PC-9 (cell line): ENCODE measurements at regions of chr3 and their contacts with region 1.

Region 1: GRCh38 chr3:71583566-71584449 is at the start of gene FOXP1:
- DNase-seq: peak; percentile 59 to 63
- H3K4me3 ChIP-seq: peak within 1 kb of the TSS; percentile 85
- H3K27ac ChIP-seq: peak within 1 kb of the TSS; percentile 55
- H3K4me1 ChIP-seq: peaks cover 30% of the 10 kb centered on the region
- H3K27me3 ChIP-seq: no peaks in the 10 kb centered on the region
- CTCF ChIP-seq: no peak
- total RNA-seq, gene FOXP1: 31.7 and 33.3 TPM in 2 replicates

Region 2: DNA sequence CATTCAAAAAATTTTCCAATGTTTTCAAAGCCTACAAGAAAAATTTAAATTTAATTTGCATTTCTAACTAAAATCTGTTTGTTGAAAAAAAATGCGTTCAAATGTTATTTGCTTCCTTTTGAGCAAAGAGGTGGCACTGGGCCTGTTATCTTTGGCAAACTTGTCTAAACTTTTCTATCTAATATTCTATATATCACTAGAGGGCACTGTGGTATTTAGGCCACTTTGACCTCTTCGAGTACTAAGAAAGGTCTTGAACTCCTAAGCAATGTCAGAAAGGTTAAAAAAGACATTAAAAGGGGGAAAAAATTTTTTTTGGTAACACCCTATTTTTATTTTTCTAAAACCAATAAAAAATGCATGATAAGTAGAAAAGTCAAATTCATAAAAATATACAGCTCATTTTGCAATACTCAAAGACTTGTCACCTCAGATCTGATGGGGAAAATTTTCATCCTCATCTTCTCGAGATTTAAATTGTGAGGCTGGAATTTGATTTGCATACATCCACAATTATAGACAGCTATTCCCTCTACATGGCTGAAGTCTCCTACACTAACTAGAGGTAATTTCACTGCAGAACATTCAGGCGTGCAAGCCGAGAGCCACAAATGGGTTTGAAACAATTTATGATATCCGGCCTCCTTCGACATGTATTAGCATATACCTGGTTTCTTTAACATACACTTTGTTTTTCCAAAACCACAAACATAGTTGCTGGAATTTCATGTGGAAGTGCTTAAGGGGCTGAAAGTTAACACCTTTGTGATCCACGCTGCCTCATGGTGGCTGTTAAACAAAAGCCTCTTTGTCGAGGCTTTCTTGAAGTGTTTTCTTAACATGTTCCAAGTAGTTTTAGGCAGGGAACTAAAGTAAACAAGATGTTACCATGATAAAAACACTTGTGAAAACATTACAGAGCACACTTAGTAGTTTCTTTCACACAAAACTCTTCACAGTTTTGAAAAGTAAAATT is 576.7 kb before region 1 on chr3:
- CTCF ChIA-PET with region 1: no interaction called
- POLR2A ChIA-PET with region 1: no interaction called
- intact Hi-C with region 1: loop called (anchors 1 kb)
- DNase-seq: no peak
- H3K4me3 ChIP-seq: no peak overlapping the region
- H3K27ac ChIP-seq: no peak overlapping the region
- H3K4me1 ChIP-seq: no peaks in the 10 kb centered on the region
- H3K27me3 ChIP-seq: no peaks in the 10 kb centered on the region
- CTCF ChIP-seq: peak; percentile 67

Region 3: GRCh38 chr3:71130471-71131374 is 453.1 kb before region 1 on chr3:
- CTCF ChIA-PET with region 1: interaction called, 3 read pairs
- POLR2A ChIA-PET with region 1: no interaction called
- intact Hi-C with region 1: loop called (anchors 5 kb)
- DNase-seq: peak in 1 of 2 experiments; percentile 42
- H3K4me3 ChIP-seq: no peak overlapping the region
- H3K27ac ChIP-seq: no peak overlapping the region
- H3K4me1 ChIP-seq: no peaks in the 10 kb centered on the region
- H3K27me3 ChIP-seq: no peaks in the 10 kb centered on the region
- CTCF ChIP-seq: no peak

Region 4: DNA sequence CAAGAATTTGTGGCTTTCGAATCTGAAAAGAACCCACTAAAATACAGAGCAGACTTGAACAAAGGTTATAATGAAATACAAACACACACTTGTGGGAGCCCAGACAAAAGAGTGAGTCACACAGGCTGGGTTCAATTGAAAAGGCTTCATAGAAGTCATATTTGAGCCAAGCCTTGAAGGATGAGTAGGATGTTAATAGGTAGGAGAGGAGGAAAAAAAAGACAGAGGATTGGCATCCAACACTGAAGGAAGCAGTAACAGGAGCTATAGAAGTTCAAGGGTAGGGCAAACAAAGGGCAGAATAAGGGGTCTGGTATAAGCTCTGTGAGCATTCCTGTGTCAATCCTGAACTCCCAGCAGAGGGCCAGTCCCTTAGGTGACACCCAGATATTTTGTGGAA is 325.7 kb before region 1 on chr3:
- CTCF ChIA-PET with region 1: no interaction called
- POLR2A ChIA-PET with region 1: no interaction called
- intact Hi-C with region 1: loop called (anchors 2 kb)
- DNase-seq: peak in 1 of 2 experiments; percentile 30
- H3K4me3 ChIP-seq: no peak overlapping the region
- H3K27ac ChIP-seq: no peak overlapping the region
- H3K4me1 ChIP-seq: no peaks in the 10 kb centered on the region
- H3K27me3 ChIP-seq: no peaks in the 10 kb centered on the region
- CTCF ChIP-seq: no peak

Region 5: GRCh38 chr3:71397046-71397445 is 186.8 kb before region 1 on chr3:
- CTCF ChIA-PET with region 1: no interaction called
- POLR2A ChIA-PET with region 1: no interaction called
- intact Hi-C with region 1: loop called (anchors 10 kb)
- DNase-seq: no peak
- H3K4me3 ChIP-seq: no peak overlapping the region
- H3K27ac ChIP-seq: no peak overlapping the region
- H3K4me1 ChIP-seq: no peaks in the 10 kb centered on the region
- H3K27me3 ChIP-seq: no peaks in the 10 kb centered on the region
- CTCF ChIP-seq: peak; percentile 58

Region 6: DNA sequence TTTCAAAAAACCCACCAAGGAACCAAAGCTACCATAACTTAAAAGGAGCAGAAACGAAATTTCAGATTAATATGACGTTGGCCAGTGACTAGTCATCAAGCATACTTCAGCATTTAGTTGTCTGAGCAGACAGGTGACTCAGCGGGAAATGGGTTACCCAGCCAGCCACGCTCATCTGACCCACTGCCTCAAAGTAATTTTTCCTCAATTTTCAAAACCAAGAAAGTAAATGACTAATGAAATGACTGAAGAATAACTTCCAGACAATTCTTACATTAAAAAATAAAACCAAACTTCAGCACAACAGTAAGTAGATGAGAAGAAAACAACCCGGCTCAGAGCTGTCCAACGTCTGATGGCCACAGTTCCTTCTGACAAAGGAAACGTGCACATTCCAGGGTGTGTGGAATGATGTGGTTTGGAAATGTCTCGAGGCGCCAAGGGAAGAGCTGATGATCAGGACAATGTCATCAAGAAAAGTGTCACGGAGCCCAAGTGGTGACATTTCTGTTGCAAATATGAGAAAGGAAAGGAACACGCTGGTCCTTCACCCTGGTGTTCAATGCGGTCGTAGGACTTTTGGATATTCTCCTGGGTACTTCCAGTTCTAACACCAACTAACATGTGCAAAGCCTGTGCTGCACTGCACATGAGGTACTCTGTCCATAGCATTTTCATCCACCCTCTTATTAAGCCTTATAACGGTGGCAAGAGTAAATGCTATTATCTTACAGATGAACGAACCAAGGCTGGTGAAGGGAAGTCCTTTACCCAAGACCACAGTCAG is 79.4 kb before region 1 on chr3:
- CTCF ChIA-PET with region 1: no interaction called
- POLR2A ChIA-PET with region 1: no interaction called
- intact Hi-C with region 1: loop called (anchors 5 kb)
- DNase-seq: peak; percentile 43 to 70
- H3K4me3 ChIP-seq: peak overlapping the region; percentile 50
- H3K27ac ChIP-seq: peak overlapping the region; percentile 89
- H3K4me1 ChIP-seq: peaks cover 22% of the 10 kb centered on the region
- H3K27me3 ChIP-seq: no peaks in the 10 kb centered on the region
- CTCF ChIP-seq: no peak

Region 7: DNA sequence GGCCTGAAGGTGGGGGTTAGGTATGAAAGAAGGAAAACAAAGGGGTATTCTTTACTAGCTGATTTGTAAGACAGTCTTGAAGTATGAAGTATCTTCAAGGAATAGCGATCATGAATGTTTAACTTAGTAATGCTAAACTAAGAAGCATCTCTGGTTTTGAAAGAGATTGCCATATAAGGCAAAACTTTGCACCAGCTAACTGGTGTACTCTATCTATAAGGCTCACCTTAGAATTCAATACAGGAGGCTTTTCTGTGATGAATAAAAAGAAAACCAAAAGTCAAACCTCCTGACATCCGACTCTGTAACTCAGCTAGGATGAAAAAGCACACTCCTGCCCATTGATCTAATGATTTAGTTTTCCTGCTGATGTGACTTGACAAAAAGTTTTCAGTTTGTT is 55.0 kb before region 1 on chr3:
- CTCF ChIA-PET with region 1: no interaction called
- POLR2A ChIA-PET with region 1: no interaction called
- intact Hi-C with region 1: no loop called
- DNase-seq: no peak
- H3K4me3 ChIP-seq: no peak overlapping the region
- H3K27ac ChIP-seq: no peak overlapping the region
- H3K4me1 ChIP-seq: peaks cover 14% of the 10 kb centered on the region; the same call in 1 of the 2 replicates
- H3K27me3 ChIP-seq: no peaks in the 10 kb centered on the region
- CTCF ChIP-seq: no peak